ENCODE measurements at regions of chr17 and their contacts with region 1.

Region 1: DNA sequence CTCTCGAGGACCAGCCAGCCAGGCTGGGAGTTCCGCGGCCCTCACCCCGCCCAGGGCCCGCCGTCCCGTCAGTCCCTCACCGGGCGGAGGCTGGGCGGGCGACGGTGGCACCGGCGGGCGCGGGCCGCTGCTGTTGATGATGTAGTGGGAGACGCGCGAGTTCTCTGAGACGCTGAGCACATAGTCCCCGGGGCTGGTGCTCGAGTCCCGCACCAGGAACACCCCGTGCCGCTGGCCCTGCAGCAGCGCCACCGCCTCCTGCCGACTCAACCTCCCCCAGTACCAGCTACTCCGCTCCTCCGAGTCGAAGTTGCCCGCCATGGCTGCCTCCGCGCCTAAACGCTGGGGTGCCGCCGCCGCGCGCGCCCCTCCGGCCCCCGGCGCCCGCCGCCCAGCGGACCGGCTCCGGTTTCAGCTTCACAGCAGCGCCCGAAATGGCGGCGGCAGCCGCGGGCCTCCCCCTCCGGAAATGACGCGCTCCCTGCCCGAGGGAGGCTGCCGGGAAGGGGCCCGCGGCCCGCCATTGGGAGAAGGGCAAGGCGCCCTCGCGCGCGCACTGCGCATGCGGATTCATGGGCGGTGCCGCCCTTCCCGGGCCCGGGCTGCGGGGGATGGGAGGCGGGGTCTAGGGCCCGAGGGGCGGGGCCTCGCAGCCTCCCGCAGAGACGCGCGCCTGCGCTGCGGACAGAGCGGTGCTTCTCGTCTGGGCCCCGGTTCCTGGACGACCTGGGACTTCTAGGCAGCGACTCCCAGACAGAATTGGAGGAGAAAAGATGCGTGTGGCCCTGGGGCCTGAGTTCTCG is at the start of gene CRK:
- DNase-seq: peak in 1 of 2 donors; percentile 94
- H3K4me3 ChIP-seq: peak within 1 kb of the TSS; percentile 96 to 99
- H3K27ac ChIP-seq: peak within 1 kb of the TSS; percentile 96
- H3K4me1 ChIP-seq: peaks cover 60% of the 10 kb centered on the region
- H3K27me3 ChIP-seq: no peaks in the 10 kb centered on the region
- CTCF ChIP-seq: peak in 1 of 3 experiments; percentile 13
- POLR2A ChIP-seq: peak; percentile 69 to 93
- total RNA-seq, gene CRK: 57.5 TPM

Region 2: GRCh38 chr17:1267471-1267947 is 188.5 kb before region 1 on chr17:
- intact Hi-C with region 1: loop called (anchors 10 kb)
- DNase-seq: no peak
- H3K4me3 ChIP-seq: peak overlapping the region; percentile 55 to 94
- H3K27ac ChIP-seq: peak overlapping the region; percentile 79
- H3K4me1 ChIP-seq: peaks cover 21% of the 10 kb centered on the region
- H3K27me3 ChIP-seq: no peaks in the 10 kb centered on the region
- CTCF ChIP-seq: no peak
- POLR2A ChIP-seq: no peak

Region 3: DNA sequence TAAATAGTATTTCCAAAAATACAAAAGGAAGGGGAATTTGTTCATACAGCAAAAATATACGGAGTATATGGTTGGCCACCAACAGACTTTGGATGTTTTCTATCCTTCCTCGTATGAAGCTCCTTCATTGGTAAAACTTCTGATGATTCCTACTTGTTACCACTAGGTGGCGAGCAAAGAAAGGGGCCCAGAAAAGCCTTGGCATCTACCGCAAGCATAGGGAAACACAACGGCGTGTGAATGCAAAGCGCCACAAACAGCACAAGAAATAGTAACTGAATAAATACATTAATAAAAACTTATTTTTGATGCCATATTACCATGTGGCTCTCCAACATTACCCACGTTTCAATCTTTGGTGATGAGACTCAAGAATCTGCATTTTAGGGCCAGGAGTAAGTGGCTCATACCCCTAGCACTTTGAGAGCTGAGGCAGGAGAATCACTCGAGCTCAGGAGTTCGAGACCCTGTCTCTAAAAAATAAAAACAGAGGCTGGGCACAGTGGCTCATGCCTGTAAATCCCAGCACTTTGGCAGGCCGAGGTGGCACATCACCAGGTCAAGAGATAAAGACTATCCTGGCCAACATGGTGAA is 90.5 kb before region 1 on chr17:
- intact Hi-C with region 1: loop called (anchors 10 kb)
- DNase-seq: no peak
- H3K4me3 ChIP-seq: no peak overlapping the region
- H3K27ac ChIP-seq: peak overlapping the region; percentile 34
- H3K4me1 ChIP-seq: peaks cover 90% of the 10 kb centered on the region
- H3K27me3 ChIP-seq: no peaks in the 10 kb centered on the region
- CTCF ChIP-seq: peak; percentile 64 to 83 (median 78)
- POLR2A ChIP-seq: no peak

Region 4: GRCh38 chr17:1486802-1487695 is 31.1 kb after region 1 on chr17:
- intact Hi-C with region 1: loop called (anchors 1 kb)
- DNase-seq: no peak
- H3K4me3 ChIP-seq: peak overlapping the region; percentile 70 to 96
- H3K27ac ChIP-seq: peak overlapping the region; percentile 98
- H3K4me1 ChIP-seq: peaks cover 73% of the 10 kb centered on the region
- H3K27me3 ChIP-seq: no peaks in the 10 kb centered on the region
- CTCF ChIP-seq: no peak
- POLR2A ChIP-seq: peak in 1 of 2 donors; percentile 5

Region 5: DNA sequence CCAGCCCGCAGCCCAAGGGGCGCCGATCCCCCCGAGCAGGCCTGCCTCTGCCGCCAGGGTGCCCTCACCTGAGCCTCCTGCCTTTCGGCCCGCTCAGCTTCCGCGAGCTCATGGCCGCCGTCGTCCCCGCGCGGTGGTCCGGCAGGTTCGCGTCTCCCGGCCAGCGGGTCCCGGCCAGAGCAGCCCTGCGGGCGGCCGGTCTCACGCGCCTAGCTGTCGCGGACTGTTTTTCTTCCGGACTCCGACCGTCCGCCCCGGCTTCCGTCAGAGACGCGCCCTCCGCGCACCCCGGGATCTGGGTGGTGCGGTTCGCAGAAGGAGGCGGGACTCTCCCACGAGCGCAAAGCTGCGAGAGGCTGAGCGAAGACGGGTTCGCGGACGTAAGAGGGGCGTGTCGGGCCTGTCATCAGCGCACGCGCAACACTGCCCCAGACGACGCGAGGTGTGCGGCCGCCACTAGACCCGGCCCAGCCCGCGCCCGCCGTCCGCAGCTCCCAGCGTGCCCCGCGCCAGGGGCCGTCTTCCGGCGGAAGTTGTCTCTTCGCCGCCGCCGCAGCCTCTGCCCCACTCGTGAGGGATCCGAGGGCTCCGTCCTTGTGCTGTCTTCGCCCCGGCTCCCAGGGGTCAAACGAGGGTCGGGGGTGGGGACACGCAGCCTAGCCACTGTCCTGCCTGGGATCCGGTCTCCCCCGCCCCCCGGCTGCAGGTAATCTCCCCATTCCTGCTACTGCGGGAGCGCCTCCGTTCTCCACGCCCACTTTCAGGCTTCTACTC is 60.6 kb after region 1 on chr17 and contains the start of gene INPP5K:
- intact Hi-C with region 1: loop called (anchors 5 kb)
- DNase-seq: peak in 1 of 2 donors; percentile 99
- H3K4me3 ChIP-seq: peak within 1 kb of the TSS; percentile 85 to 89
- H3K27ac ChIP-seq: peak within 1 kb of the TSS; percentile 93
- H3K4me1 ChIP-seq: peaks cover 56% of the 10 kb centered on the region
- H3K27me3 ChIP-seq: no peaks in the 10 kb centered on the region
- CTCF ChIP-seq: peak in 2 of 3 experiments; percentile 17 to 23
- POLR2A ChIP-seq: peak in 1 of 2 donors; percentile 42
- total RNA-seq, gene INPP5K: 96.0 TPM

Measured in vagina (tissue), 2 donors.